Activated T-helper 1 cell treated with anti-CD3 and anti-CD28 coated beads, Interleukin-12 subunit alpha, Interleukin-12 subunit beta, Interleukin-2, Interleukin-4 antibody, amounts not matched to agents 30 ng/mL and 10 ng/mL and 1 ng/mL, durations not matched to agents 14 hours and 24 hours and 36 hours (primary cell): ENCODE measurements at regions of chr5 and their contacts with region 1.

Region 1: GRCh38 chr5:174690271-174690670 is 34.1 kb upstream of the MSX2 start:
- DNase-seq: no peak
- H3K4me3 Mint-ChIP-seq: no peak overlapping the region
- H3K27ac Mint-ChIP-seq: no peak overlapping the region
- H3K4me1 Mint-ChIP-seq: peaks cover 4% of the 10 kb centered on the region
- H3K27me3 Mint-ChIP-seq: peaks cover 51% of the 10 kb centered on the region

Region 2: DNA sequence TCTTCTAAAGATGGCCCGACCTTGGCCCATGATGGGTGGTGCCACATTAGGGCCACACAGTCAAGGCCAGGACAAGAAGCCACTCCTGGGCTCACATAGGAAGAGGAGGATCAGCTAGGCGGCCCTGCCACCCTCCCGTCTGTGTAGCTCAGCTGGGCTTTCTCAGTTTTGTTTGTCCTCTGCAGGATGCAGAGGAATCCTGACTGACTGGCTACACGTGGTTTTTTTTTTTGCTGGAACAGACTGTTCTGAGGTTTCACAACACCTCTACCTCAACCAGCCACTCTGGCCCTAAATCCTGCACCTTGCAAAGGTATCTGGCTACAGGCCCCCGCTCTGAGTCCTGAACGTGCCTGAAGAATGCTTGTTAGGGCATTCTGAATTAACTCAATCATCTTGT is 54.2 kb before region 1 on chr5:
- intact Hi-C with region 1: loop called (anchors 1 kb)
- DNase-seq: no peak
- H3K4me3 Mint-ChIP-seq: no peak overlapping the region
- H3K27ac Mint-ChIP-seq: no peak overlapping the region
- H3K4me1 Mint-ChIP-seq: no peaks in the 10 kb centered on the region
- H3K27me3 Mint-ChIP-seq: no peaks in the 10 kb centered on the region

Region 3: DNA sequence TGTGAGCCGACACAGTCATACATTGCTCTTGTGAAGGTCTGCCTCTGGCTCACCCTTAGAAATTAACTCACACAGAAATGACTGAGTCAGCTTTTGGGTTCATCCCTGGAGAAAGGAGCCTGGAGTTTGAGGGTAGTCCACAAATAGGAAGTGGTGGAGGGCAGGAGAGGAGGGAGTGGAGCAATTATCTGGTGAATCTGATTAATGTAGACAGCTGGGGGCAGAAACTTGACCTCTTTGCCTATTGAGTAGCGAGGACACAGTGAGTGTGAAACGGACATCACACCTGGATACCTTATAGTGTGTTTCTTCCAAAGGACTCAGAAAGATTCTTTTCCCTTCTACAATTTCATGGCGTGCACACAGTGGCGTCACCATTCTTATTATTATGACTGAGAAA is 14.4 kb before region 1 on chr5:
- intact Hi-C with region 1: no loop called
- DNase-seq: no peak
- H3K4me3 Mint-ChIP-seq: no peak overlapping the region
- H3K27ac Mint-ChIP-seq: no peak overlapping the region
- H3K4me1 Mint-ChIP-seq: no peaks in the 10 kb centered on the region
- H3K27me3 Mint-ChIP-seq: no peaks in the 10 kb centered on the region

Region 4: DNA sequence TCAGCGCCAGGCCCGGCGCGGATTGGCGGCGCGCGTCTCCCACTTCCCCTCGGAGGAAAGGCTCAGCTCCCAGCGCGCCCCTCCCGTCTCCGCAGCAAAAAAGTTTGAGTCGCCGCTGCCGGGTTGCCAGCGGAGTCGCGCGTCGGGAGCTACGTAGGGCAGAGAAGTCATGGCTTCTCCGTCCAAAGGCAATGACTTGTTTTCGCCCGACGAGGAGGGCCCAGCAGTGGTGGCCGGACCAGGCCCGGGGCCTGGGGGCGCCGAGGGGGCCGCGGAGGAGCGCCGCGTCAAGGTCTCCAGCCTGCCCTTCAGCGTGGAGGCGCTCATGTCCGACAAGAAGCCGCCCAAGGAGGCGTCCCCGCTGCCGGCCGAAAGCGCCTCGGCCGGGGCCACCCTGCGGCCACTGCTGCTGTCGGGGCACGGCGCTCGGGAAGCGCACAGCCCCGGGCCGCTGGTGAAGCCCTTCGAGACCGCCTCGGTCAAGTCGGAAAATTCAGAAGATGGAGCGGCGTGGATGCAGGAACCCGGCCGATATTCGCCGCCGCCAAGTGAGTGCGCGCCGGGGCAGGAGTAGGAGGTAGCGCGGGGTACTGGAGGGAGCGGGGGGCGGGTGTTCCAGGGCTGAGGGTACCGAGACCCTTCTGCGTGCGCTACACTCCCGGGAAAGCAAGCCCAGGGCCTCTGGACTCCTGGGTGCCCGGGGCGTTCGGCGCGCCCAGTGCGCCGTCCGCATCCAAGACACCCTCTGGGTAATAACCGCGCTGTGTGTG is 34.4 kb after region 1 on chr5 and contains the start of gene MSX2:
- intact Hi-C with region 1: no loop called
- DNase-seq: no peak
- H3K4me3 Mint-ChIP-seq: peak within 1 kb of the TSS; percentile 15
- H3K27ac Mint-ChIP-seq: peak within 1 kb of the TSS; percentile 31
- H3K4me1 Mint-ChIP-seq: peaks cover 5% of the 10 kb centered on the region
- H3K27me3 Mint-ChIP-seq: peaks cover 82% of the 10 kb centered on the region
- total RNA-seq, gene MSX2: not detected in 2 replicates